Activated CD8-positive, alpha-beta T cell treated with anti-CD3 and anti-CD28 coated beads, Interleukin-2, amount 10 ng/mL, durations not matched to agents 7 days and 5 days (primary cell): ENCODE measurements at regions of chr7 and their contacts with region 1.

Region 1: DNA sequence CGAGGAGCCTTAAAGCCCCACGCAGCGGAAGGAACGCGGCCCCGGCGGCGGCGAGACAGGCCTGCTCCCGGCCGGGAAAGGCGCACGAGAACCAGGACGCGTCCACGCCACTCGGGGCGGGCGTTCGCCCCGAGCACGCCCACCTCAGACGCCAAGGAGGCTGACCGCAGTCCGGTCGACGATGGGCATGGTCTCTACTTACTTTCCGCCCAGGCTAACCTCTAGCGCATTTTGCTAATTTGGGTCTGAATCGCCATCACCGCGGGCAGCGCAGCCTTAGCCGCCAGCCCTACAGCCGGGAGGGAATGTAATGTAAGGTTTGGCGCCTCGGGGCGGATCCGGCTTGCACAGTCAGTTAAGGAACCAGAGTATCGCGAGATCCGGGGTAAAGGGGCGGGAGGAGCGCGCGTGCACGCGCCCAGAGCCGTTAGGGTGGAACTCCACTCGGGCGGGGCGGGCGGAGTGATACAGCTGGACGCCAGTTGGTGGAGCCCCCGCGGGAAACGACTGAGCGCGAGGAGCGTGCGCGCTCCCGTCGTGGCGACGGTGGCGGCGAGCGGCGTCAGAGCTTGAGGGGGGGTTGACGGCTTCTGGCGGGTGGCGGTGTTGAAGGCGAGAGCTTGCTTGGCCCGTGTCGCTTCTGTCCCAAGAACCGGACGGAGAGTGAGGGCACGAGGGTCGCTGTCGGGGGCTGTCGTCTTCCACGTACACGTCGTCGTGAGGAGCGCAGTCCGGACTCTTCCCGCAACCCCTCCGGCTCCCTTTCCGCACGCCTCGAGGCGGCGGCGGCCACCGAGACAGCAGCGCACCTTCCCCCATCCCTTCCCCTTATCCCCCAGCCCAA is at the start of gene LUC7L2:
- DNase-seq: peak; percentile 100
- ATAC-seq: peak; percentile 78
- H3K4me3 Mint-ChIP-seq: peak within 1 kb of the TSS; percentile 95
- H3K27ac Mint-ChIP-seq: peak within 1 kb of the TSS; percentile 99
- H3K4me1 Mint-ChIP-seq: peaks cover 44% of the 10 kb centered on the region
- H3K27me3 Mint-ChIP-seq: no peaks in the 10 kb centered on the region
- total RNA-seq, gene LUC7L2: 126 to 131 TPM

Region 2: DNA sequence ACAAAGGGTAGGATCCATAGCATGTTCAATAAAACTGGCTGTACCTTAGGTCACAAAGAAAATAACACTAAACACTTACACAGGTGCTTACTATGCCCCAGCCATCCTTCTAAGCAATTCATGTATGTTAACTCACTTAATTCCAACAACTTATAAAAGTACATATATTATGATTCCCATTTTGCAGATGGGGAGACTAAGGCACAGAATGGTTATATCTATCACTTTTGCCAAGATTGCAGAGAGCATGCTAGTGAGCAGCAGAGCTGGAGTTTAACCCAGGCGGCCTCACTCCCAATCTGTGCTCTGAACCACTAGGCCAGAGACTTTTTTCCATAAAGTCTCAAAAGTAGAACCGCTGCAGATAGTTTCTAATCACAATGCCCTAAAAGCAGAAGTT is 147.5 kb before region 1 on chr7:
- CTCF ChIA-PET with region 1: no interaction called
- POLR2A ChIA-PET with region 1: no interaction called
- DNase-seq: no peak
- ATAC-seq: no peak
- H3K4me3 Mint-ChIP-seq: no peak overlapping the region
- H3K27ac Mint-ChIP-seq: no peak overlapping the region
- H3K4me1 Mint-ChIP-seq: no peaks in the 10 kb centered on the region
- H3K27me3 Mint-ChIP-seq: peaks cover 24% of the 10 kb centered on the region

Region 3: GRCh38 chr7:139340037-139340807 is 19.4 kb before region 1 on chr7:
- CTCF ChIA-PET with region 1: interaction called, 5 read pairs
- POLR2A ChIA-PET with region 1: interaction called, 20 read pairs
- DNase-seq: peak; percentile 99
- ATAC-seq: peak; percentile 80
- H3K4me3 Mint-ChIP-seq: peak overlapping the region; percentile 92
- H3K27ac Mint-ChIP-seq: peak overlapping the region; percentile 97
- H3K4me1 Mint-ChIP-seq: peaks cover 27% of the 10 kb centered on the region
- H3K27me3 Mint-ChIP-seq: peaks cover 3% of the 10 kb centered on the region

Region 4: GRCh38 chr7:139370301-139370942 is 10.8 kb after region 1 on chr7:
- CTCF ChIA-PET with region 1: interaction called, 4 read pairs
- POLR2A ChIA-PET with region 1: interaction called, 11 read pairs
- DNase-seq: no peak
- ATAC-seq: no peak
- H3K4me3 Mint-ChIP-seq: no peak overlapping the region
- H3K27ac Mint-ChIP-seq: peak overlapping the region; percentile 36
- H3K4me1 Mint-ChIP-seq: peaks cover 45% of the 10 kb centered on the region
- H3K27me3 Mint-ChIP-seq: no peaks in the 10 kb centered on the region